ENCODE measurements at regions of chr17 and their contacts with region 1.

Region 1: DNA sequence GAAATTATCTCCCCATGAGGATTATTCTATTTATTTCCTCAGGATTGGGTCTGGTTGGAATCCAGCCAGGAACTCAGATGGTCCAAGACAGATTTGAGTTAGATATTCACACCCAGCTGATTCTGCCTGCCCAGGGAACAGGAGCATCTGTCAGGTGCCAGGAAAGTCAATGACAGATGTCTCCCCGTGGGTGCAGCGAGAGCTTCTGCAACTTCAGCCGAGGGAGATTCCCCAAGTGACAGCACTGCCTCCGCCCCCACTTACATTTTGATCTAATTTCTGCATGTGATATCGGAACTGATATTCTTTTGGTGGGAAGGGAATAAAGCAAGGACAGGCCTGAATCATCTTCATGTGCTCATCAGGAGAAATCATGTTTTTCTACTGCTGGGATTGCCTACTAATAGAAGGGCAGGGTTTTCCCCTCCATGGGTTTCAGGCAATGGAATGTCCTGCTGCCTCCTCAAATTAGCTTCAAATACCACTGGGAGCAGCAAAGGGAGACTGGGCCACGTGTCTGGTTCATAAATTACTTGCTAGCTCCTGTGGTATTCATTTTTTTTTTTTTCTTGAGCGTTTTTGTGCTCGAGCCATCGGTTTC is 15.7 kb upstream of the DHX8 start:
- DNase-seq: no peak

Region 2: GRCh38 chr17:43431714-43432523 is 36.2 kb before region 1 on chr17:
- CTCF ChIA-PET with region 1: no interaction called
- POLR2A ChIA-PET with region 1: no interaction called
- DNase-seq: no peak

Region 3: DNA sequence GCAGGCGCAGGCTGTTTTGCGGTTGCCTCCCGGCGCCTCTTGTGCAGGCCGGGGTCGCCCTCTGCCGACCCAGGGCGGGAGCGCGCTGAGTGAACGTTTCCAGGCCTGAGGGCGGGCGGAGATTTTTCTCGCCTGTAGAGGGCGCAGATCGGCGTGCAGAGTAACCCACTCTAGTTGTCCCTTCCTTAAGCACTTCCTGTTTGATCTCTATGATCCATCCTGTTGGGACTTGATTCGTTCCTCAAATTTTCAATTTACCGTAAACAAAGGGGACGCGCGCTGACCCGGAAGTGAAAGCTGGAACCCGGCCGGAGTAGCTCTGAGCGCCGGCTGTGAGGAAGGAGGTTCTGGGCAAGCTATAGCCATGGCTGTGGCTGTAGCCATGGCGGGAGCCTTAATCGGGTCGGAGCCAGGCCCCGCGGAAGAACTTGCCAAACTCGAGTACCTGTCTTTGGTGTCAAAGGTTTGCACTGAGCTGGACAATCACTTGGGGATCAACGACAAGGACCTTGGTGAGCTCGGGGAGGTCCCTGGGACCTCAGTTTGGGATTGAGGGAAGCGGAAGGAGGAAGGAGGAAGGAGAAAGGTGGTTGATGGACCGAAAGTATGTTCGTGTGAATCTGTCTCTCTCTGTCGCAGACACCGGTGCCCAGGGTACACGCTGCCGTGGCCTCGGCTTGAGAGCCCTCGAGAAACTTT is 15.7 kb after region 1 on chr17 and contains the start of gene DHX8:
- CTCF ChIA-PET with region 1: interaction called, 14 read pairs
- POLR2A ChIA-PET with region 1: interaction called, 3 read pairs
- DNase-seq: peak; percentile 91

Region 4: GRCh38 chr17:43568506-43569082 is 100.5 kb after region 1 on chr17:
- CTCF ChIA-PET with region 1: no interaction called
- POLR2A ChIA-PET with region 1: no interaction called
- DNase-seq: no peak